ENCODE measurements at regions of chr6 and their contacts with region 1.

Region 1: DNA sequence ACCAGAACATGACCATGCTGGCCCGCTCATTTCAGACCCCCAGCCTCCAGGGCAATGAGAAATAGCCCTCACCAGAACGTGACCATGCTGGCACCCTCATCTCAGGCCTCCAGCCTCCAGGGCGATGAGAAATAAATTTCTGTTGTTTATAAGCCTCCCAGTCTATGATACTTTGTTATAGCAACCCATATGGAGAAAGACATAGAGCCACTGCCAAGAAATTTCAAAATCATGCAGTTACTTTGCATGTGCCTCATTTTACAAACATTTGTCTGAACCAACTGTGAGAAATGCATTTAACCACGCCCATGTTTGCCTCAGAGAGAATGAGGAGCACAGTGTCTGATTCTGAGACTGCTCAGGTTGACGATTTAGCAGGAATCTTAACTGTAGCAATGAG is 15.5 kb downstream of the CYP39A1 start:
- DNase-seq: no peak
- H3K4me3 ChIP-seq: no peak overlapping the region
- H3K4me3 Mint-ChIP-seq: no peak overlapping the region
- H3K27ac ChIP-seq: no peak overlapping the region
- H3K27ac Mint-ChIP-seq: no peak overlapping the region
- H3K4me1 ChIP-seq: no peaks in the 10 kb centered on the region
- H3K4me1 Mint-ChIP-seq: no peaks in the 10 kb centered on the region
- H3K27me3 ChIP-seq: no peaks in the 10 kb centered on the region
- H3K27me3 Mint-ChIP-seq: peaks cover 0 to 3% (median 2%) of the 10 kb centered on the region in 3 donors
- CTCF ChIP-seq: no peak

Region 2: DNA sequence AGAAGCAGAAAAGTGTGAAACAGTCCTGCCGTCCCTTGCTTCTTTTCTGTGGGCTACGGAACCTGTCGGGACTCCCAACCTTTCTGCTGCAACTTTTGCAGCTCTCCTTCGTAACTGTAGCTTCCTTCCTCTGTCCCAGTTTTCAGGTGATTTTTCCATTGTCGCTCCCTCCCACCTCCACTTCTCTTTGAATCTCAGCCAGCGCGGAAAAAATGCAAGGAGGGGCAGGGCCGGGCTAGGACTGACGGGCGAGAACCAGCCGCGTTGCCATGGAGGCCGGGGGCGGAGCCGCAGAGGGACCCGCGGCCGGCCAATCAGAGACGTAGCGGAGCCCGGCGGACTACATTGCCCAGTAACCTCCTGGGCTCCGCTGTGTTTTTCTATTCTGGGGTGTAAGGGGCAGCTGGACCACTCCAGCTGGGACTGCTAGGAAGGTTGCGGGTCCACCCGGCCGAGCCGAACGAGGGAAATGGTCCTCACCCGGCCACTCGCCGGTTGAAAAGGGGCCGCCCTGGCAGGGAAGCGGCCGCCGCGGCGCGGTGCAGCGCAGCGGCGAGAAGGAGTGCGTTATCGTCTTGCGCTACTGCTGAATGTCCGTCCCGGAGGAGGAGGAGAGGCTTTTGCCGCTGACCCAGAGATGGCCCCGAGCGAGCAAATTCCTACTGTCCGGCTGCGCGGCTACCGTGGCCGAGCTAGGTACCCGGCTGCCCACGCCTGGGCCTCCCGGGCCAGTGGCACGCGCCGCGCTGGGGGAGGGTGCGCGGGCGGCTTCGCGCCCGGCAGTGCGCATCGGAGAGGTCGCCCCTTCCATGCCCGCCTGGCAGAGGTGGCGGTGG is 15.7 kb after region 1 on chr6 and contains the starts of genes CYP39A1 and SLC25A27:
- intact Hi-C with region 1: loop called in 1 of 2 experiments (anchors 1 kb)
- DNase-seq: peak; percentile 52 to 71 (median 61)
- H3K4me3 ChIP-seq: peak within 1 kb of the TSS; percentile 56 to 91 (median 70)
- H3K4me3 Mint-ChIP-seq: peak within 1 kb of the TSS; percentile 92 to 95
- H3K27ac ChIP-seq: no peak within 1 kb of the TSS
- H3K27ac Mint-ChIP-seq: peak within 1 kb of the TSS in 3 of 7 donors; percentile 1 to 38 (median 19)
- H3K4me1 ChIP-seq: peaks cover 10 to 17% of the 10 kb centered on the region in 2 donors
- H3K4me1 Mint-ChIP-seq: peaks cover 14% of the 10 kb centered on the region
- H3K27me3 ChIP-seq: peaks cover 21 to 45% of the 10 kb centered on the region in 2 donors
- H3K27me3 Mint-ChIP-seq: peaks cover 30 to 50% (median 35%) of the 10 kb centered on the region in 3 donors
- CTCF ChIP-seq: no peak
- polyA plus RNA-seq, gene CYP39A1: not detected
- polyA plus RNA-seq, gene SLC25A27: 0.34 to 1.7 TPM in 2 of 3 donors, not detected in the other

Measured in CD14-positive monocyte (primary cell).